Common myeloid progenitor, CD34-positive (primary cell): ENCODE measurements at regions of chr3 and their contacts with region 1.

Region 1: GRCh38 chr3:184543843-184544512 is 17.6 kb upstream of the EPHB3 start:
- DNase-seq: peak; percentile 85 to 93 (median 89)
- H3K4me3 ChIP-seq: peak overlapping the region in 1 of 7 experiments; percentile 45
- H3K27ac ChIP-seq: no peak overlapping the region
- H3K4me1 ChIP-seq: peaks cover 0 to 12% (median 3%) of the 10 kb centered on the region in 4 experiments
- H3K27me3 ChIP-seq: peaks cover 0 to 8% (median 3%) of the 10 kb centered on the region in 5 experiments

Region 2: DNA sequence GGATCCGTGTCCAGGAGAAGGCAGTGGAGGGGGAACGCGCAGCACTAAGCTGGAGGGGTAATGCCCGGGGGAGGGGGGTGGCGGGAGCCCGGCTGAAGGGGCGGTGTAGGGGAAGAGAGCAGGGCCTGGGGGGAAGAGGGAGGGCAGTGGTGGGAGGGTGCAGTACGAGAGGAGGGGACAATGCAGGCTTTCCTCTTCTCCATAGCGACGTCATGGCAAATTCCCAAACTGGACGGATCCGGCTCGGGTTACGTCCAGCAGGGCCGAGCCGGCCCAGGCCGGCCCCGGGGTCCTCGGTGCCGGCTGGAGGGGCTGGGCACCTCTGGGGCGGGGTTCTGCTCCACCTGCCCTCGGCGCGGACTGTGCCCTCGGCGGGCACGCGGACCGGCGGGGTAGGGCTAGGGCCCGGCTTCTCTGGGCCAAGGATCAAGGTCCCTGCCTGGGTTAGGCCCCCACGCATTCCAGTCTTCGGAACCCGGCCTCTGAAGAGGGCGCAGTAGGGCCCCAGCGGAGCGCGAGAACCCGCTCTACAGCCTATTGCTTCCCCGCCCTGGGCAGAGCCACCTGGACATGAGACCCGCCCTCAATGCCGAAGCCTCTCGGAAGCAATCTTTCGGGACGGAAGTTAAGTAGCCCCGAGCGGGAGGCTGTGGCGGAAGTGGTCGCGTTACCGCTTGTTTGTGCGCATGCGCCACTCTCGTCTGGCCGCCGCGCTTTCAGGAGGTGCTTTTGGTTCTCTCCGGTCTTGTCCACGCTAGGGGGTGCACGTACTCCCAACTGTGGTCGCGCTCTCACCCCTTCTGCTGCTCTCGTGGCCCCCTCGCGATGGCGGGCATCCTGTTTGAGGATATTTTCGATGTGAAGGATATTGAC is 181.1 kb before region 1 on chr3:
- CTCF ChIA-PET with region 1: interaction called, 368 read pairs
- POLR2A ChIA-PET with region 1: no interaction called
- DNase-seq: peak; percentile 98
- H3K4me3 ChIP-seq: peak overlapping the region; percentile 54 to 92 (median 74)
- H3K27ac ChIP-seq: peak overlapping the region in 1 of 2 experiments; percentile 77
- H3K4me1 ChIP-seq: peaks cover 0 to 33% (median 31%) of the 10 kb centered on the region in 4 experiments
- H3K27me3 ChIP-seq: peaks cover 0 to 3% (median 0%) of the 10 kb centered on the region in 5 experiments

Region 3: DNA sequence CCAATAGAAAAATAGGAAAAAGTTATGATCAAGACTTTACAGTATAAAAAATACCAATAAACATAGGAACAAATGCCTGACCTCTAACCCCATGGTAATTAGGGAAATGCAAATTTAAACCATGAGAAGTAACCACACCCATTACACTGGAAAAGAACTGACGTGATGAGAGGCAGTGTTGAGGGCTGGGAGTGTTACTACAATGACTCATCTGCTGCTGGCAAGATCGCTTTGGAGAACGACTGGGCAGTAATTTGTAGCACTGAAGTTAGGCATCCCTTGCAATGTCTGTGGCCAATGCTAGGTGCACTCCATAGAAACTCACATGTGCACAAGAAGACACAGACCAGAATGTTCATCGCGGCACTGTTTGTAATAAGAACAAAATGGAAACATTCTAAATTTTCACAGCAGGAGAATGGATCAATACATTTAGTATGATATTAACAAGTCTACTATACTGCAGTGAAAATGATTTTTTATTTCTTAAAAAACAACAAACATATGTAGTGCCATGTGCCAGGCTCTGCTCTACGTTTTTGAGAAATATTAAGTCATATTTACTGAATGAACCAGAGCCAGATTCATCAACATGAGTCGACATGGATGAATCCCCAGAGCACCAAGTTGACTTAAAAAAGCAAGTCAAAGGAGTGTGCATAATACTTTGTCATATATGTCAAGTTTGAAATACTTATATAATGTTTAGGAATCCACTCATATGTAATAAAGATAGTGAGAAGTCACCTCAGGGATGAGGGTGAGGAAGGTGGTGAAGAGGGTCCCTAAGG is 20.0 kb before region 1 on chr3:
- CTCF ChIA-PET with region 1: interaction called, 130 read pairs
- POLR2A ChIA-PET with region 1: no interaction called
- DNase-seq: peak; percentile 64 to 83 (median 68)
- H3K4me3 ChIP-seq: no peak overlapping the region
- H3K27ac ChIP-seq: no peak overlapping the region
- H3K4me1 ChIP-seq: peaks cover 7 to 30% (median 17%) of the 10 kb centered on the region in 4 experiments
- H3K27me3 ChIP-seq: no peaks in the 10 kb centered on the region